Dorsolateral prefrontal cortex (tissue), 120 donors: ENCODE measurements at regions of chr7 and their contacts with region 1.

Region 1: DNA sequence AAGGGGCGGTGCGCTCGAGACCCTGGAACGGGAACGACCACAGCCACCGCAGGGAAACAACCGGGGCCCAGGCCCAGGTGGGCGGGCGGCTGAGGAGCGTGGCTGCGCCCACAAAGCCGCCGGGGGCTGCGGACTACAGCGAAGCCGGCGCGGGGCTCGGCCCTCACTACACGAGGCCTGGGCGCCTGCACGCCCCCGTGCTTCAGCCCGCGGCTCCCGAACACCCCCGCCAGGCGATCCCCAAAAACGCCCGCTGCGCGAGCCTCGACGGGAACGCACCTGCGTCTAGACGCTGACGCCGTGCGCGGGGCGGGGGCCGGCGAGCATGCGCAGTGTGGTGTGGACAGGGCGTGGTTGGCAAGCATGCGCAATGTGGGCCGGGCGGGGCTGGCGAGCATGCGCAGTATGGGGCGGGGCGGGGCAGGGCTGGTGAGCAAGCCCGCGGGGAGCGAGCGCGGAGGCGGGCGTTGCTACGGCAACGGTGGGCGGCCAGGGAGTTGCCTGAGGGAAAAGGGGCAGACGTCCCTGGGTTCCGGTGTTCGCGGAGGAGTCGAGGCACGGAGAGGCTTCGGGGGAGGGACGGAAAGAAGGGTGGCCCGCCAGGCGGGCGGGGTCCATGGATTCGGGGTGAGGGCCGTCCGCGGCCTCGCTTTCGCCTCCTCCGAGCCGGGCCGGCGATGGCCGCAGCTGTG is at the start of gene RNF32:
- DNase-seq: peak; percentile 79 to 94 (median 88)
- H3K4me3 ChIP-seq: peak within 1 kb of the TSS; percentile 57 to 99 (median 86)
- H3K27ac ChIP-seq: peak within 1 kb of the TSS in 57 of 59 donors; percentile 46 to 91 (median 81)
- H3K27me3 ChIP-seq: no peaks in the 10 kb centered on the region
- CTCF ChIP-seq: peak in 8 of 56 donors; percentile 7 to 40 (median 12)
- total RNA-seq, gene RNF32: 0.48 to 8.9 (median 2.9) TPM

Region 2: DNA sequence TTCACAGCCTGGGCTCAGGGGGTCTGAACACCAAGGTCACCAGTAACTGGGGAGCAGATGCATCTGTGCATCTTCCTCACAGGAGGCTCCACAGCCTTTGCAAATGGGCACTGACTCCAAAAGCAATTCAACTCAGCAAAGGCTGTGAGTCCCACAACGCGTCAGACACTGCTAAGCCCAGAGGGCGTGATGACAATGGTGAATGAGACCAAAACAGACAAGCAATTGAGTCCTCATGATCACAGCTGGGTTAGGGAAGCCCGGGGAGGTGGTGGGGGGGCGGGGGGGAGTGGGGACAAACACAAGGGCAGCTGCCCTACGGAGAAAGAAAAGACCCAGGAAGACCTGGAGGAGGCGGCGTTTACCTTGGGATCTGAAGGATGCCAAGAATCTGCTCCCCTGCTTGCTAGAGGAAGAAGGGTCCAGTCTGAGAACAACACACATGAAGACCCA is 61.4 kb before region 1 on chr7:
- intact Hi-C with region 1: loop called in 1 of 2 experiments (anchors 2 kb)
- DNase-seq: peak in 7 of 10 donors; percentile 49 to 84 (median 69)
- H3K4me3 ChIP-seq: peak overlapping the region in 56 of 59 donors; percentile 14 to 69 (median 46)
- H3K27ac ChIP-seq: peak overlapping the region; percentile 41 to 97 (median 91)
- H3K27me3 ChIP-seq: no peaks in the 10 kb centered on the region
- CTCF ChIP-seq: peak in 2 of 56 donors; percentile 8 to 23

Region 3: GRCh38 chr7:156751319-156751718 is 110.9 kb after region 1 on chr7:
- intact Hi-C with region 1: no loop called
- DNase-seq: peak in 1 of 10 donors; percentile 10
- H3K4me3 ChIP-seq: no peak overlapping the region
- H3K27ac ChIP-seq: no peak overlapping the region
- H3K27me3 ChIP-seq: no peaks in the 10 kb centered on the region
- CTCF ChIP-seq: no peak